ENCODE measurements at regions of chr3 and their contacts with region 1.

Region 1: GRCh38 chr3:44186111-44186672 is 55.5 kb upstream of the TOPAZ1 start:
- DNase-seq: no peak
- ATAC-seq: no peak
- H3K4me3 ChIP-seq: no peak overlapping the region
- H3K27ac ChIP-seq: no peak overlapping the region
- H3K4me1 ChIP-seq: no peaks in the 10 kb centered on the region
- CTCF ChIP-seq: no peak
- EP300 ChIP-seq: no peak
- POLR2A ChIP-seq: no peak
- RAD21 ChIP-seq: no peak

Region 2: DNA sequence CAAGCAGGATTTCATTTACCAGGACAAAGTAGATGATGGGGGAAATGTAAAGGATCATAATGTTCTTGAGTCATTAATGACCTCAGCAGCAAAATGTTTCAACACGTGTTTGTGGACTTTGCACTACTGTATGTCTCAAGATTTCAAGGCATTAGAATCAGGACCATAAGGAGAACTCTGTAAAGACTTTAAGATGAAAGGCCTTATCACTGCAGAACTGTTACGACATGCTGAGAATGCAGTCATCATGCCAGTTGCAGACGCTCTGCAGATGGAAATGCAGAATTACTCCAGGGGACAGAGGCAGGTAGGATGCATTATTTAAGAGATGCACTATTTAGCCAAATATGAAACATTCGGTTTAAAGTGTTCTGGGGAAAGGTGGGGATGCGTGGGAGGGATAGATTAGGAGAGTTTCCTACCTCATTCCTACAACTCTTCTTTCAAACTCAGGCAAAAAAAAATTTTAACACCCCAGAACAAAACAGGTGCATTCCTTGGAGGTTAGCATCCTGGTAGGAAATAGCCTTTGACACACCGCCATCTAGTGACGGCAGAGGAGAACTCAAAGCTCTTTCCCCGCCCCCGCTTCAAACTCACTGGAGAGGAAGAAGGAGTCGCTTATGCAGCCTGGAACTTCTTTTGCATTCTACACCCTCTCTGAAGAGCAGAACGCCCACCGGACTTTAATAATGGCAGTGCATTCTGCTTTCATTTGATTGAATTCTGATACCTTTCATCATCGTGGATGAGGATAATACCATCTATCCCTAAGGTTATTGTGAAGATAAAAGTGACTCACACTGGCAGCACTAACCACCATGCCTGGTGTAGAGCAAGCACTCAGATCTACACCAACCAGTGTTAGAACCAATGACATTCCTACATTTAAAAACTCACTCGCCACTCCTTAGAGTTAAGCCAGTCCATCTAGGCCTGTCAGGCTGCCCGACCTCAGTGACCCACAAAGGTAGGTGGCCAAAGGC is 12.4 kb after region 1 on chr3:
- CTCF ChIA-PET with region 1: interaction called, 14 read pairs
- POLR2A ChIA-PET with region 1: no interaction called
- DNase-seq: peak; percentile 51 to 67
- ATAC-seq: peak; percentile 91 to 94
- H3K4me3 ChIP-seq: no peak overlapping the region
- H3K27ac ChIP-seq: no peak overlapping the region
- H3K4me1 ChIP-seq: peaks cover 6% of the 10 kb centered on the region; the same call in 2 of the 3 replicates
- CTCF ChIP-seq: peak; percentile 71
- EP300 ChIP-seq: no peak
- POLR2A ChIP-seq: no peak
- RAD21 ChIP-seq: peak; percentile 82 to 89

Measured in A549 (cell line).